ENCODE measurements at regions of chr5 and their contacts with region 1.

Region 1: GRCh38 chr5:137531266-137531665 is 32.1 kb upstream of the SPOCK1 start:
- DNase-seq: no peak
- ATAC-seq: no peak
- H3K4me3 ChIP-seq: no peak overlapping the region
- H3K27ac ChIP-seq: no peak overlapping the region
- H3K4me1 ChIP-seq: no peaks in the 10 kb centered on the region
- H3K27me3 ChIP-seq: no peaks in the 10 kb centered on the region
- CTCF ChIP-seq: no peak
- POLR2A ChIP-seq: no peak

Region 2: GRCh38 chr5:137466889-137467288 is 64.4 kb before region 1 on chr5:
- intact Hi-C with region 1: loop called in 1 of 10 experiments (anchors 5 kb)
- DNase-seq: no peak
- ATAC-seq: no peak
- H3K4me3 ChIP-seq: no peak overlapping the region
- H3K27ac ChIP-seq: no peak overlapping the region
- H3K4me1 ChIP-seq: peaks cover 0 to 7% (median 0%) of the 10 kb centered on the region in 12 donors
- H3K27me3 ChIP-seq: no peaks in the 10 kb centered on the region
- CTCF ChIP-seq: no peak
- POLR2A ChIP-seq: no peak